ENCODE measurements at regions of chr15 and their contacts with region 1.

Region 1: GRCh38 chr15:101159096-101159935 is 92.5 kb downstream of the CHSY1 start:
- DNase-seq: no peak
- CTCF ChIP-seq: no peak

Region 2: DNA sequence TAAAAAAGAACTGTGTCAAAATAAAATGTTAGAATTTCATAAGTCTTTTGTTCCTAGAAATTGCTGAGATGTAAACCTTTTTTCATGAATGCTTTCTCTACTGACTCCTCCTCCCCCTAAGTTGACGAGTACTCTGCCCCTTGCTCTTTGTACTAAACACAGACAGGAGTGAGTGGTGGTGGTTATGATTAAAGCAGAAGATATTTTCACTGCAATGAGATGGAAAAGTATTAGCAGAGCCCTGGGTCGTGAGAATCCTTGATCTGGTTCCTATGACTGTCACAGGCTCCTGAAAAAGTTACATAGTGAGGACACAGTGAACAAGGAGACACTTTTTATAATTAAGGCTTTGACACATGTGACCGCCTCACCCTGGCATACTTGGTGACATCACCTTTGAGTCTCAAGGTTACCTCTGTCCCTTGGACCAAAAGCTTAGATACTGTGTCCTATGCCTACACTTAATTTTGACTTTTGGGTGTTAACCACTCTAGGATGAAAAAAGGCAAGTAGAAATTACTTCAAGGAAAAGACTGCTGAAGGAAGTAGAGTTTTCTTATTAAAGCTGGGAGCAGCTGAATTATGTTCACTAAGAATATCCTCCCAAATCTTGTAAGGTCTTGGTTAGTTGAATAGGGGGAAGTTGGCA is 1295.6 kb before region 1 on chr15:
- CTCF ChIA-PET with region 1: no interaction called
- POLR2A ChIA-PET with region 1: no interaction called
- DNase-seq: no peak
- CTCF ChIP-seq: no peak

Region 3: DNA sequence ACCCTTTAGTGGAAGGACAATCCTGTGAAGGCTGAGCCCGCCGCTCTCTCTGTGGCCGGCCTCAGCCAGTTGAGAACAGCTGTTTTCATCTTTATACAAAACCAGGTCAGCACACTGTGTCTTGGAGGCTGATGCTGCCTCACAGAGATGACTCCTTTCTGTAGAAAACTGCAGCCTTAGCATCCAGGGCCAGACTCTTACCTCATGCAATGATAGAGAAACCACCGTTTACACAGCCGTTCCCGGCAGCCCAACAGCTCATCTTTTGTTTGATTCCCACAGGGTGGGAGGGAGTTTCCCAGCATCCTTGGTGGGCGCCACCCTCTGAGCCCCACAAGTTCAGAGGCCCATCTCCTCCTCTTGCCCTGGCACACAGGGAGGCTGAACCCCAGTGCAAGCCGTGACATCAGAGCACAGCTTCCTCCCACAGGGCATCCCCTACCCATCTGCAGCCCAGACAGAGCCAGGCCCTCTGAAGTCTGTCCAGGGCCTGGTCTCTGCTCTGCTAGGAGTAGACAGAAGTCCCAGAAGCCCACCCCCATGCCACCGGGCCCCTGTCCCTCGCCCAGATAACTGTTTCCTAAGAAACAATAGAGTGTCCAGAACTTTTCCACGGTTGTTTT is 135.1 kb before region 1 on chr15:
- CTCF ChIA-PET with region 1: no interaction called
- POLR2A ChIA-PET with region 1: no interaction called
- DNase-seq: no peak
- CTCF ChIP-seq: no peak

Region 4: GRCh38 chr15:101132390-101133180 is 26.7 kb before region 1 on chr15:
- CTCF ChIA-PET with region 1: no interaction called
- POLR2A ChIA-PET with region 1: no interaction called
- DNase-seq: no peak
- CTCF ChIP-seq: no peak

Region 5: GRCh38 chr15:101148881-101149664 is 10.2 kb before region 1 on chr15:
- CTCF ChIA-PET with region 1: interaction called, 10 read pairs
- POLR2A ChIA-PET with region 1: no interaction called
- DNase-seq: no peak
- CTCF ChIP-seq: no peak

Region 6: DNA sequence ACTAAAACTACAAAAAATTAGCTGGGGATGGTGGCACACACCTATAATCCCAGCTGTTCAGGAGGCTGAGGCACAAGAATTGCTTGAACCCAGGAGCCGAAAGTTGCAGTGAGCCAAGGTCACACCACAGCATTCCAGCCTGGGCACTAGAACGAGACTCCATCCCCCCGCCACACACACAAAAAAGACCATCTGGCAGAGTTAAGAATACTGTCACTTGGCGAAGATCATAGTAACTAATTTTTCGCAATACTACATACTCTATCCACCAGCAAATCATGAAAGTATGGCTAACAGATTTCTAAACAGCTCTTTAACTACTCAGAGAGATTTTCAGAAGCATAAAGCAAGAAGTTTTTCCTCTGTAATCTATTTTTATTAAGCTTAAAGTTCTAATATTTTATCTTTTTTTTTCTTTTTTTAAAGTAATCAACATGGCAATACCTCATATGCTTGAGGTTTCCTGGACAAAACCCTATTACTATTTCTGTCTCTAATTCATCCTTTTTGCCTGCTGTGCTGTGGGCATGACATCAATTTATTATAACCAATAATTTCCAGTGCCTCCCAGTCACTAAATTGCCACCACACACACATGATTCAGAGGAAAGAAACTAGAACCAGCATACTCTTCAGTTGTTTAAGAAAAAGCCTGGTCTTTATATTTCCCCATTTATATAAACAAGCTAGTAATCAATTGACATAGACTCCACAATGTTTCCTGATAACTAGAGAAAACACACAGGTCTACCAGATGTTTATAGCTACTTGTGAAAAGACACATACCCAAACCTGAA is 45.6 kb after region 1 on chr15:
- CTCF ChIA-PET with region 1: no interaction called
- POLR2A ChIA-PET with region 1: no interaction called
- DNase-seq: no peak
- CTCF ChIP-seq: no peak

Measured in GM10248 (cell line).